Activated T-helper 2 cell treated with anti-CD3 and anti-CD28 coated beads, Interferon-gamma antibody, Interleukin-2, Interleukin-4, amounts not matched to agents 10 μg/mL and 5 μg/mL and 100 μg/mL, durations not matched to agents 14 hours and 24 hours and 36 hours (primary cell): ENCODE measurements at regions of chr9 and their contacts with region 1.

Region 1: GRCh38 chr9:93453047-93453914 is at the start of gene FAM120AOS:
- DNase-seq: peak; percentile 79
- H3K4me3 Mint-ChIP-seq: peak within 1 kb of the TSS; percentile 92
- H3K27ac Mint-ChIP-seq: peak within 1 kb of the TSS; percentile 93
- H3K4me1 Mint-ChIP-seq: peaks cover 44% of the 10 kb centered on the region
- H3K27me3 Mint-ChIP-seq: no peaks in the 10 kb centered on the region
- total RNA-seq, gene FAM120AOS: 40.9 and 41.1 TPM in 2 replicates

Region 2: GRCh38 chr9:93064392-93065134 is 388.7 kb before region 1 on chr9:
- intact Hi-C with region 1: loop called (anchors 5 kb)
- DNase-seq: peak; percentile 90
- H3K4me3 Mint-ChIP-seq: peak overlapping the region; percentile 76
- H3K27ac Mint-ChIP-seq: peak overlapping the region; percentile 94
- H3K4me1 Mint-ChIP-seq: peaks cover 64% of the 10 kb centered on the region
- H3K27me3 Mint-ChIP-seq: no peaks in the 10 kb centered on the region

Region 3: DNA sequence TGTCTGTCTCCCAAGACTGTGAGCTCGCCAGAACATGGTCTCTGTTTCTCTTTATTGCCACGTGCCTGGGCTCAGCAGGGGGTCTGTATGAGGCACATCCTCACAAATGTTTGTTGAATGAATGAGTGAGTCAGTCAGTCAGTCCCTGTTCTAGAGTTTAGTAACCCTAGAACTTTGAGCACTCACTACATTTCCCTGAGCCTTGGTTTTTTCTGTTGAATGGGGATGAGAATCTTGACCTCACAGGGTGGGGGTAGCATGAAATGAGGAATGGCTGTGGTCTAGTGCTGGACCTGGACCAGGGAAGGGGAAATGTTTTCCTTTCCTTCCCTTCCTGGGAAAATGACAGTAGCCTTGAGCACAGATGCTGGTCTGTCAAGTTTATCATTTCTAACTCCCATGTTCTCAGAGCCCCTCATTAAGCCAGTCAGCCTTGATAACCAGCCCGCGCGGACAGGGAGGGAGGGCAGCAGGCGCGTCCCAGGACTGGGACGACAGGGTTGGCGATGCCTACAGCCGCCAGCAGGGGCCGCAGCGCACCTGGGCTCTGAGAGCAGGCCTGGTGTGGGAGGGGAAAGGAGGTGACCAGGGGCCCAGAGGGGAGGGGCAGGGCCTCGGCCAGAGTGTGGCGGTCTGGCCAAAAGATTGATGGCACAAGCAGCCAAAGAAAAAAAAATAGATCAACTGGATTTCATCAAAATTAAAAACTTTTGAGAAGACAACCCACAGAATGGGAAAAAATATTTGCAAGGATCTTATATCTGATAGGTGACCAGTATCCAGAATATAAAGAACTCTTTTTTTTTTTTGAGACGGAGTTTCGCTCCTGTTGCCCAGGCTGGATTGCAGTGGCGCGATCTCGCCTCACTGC is 293.4 kb before region 1 on chr9:
- intact Hi-C with region 1: loop called (anchors 5 kb)
- DNase-seq: peak; percentile 60
- H3K4me3 Mint-ChIP-seq: no peak overlapping the region
- H3K27ac Mint-ChIP-seq: peak overlapping the region; percentile 53
- H3K4me1 Mint-ChIP-seq: peaks cover 22% of the 10 kb centered on the region
- H3K27me3 Mint-ChIP-seq: no peaks in the 10 kb centered on the region

Region 4: GRCh38 chr9:93505541-93506132 is 52.4 kb after region 1 on chr9:
- intact Hi-C with region 1: loop called (anchors 2 kb)
- DNase-seq: no peak
- H3K4me3 Mint-ChIP-seq: no peak overlapping the region
- H3K27ac Mint-ChIP-seq: no peak overlapping the region
- H3K4me1 Mint-ChIP-seq: peaks cover 57% of the 10 kb centered on the region
- H3K27me3 Mint-ChIP-seq: no peaks in the 10 kb centered on the region

Region 5: GRCh38 chr9:94166237-94166963 is 713.1 kb after region 1 on chr9:
- intact Hi-C with region 1: loop called (anchors 5 kb)
- DNase-seq: peak; percentile 91
- H3K4me3 Mint-ChIP-seq: peak overlapping the region; percentile 88
- H3K27ac Mint-ChIP-seq: peak overlapping the region; percentile 84
- H3K4me1 Mint-ChIP-seq: peaks cover 44% of the 10 kb centered on the region
- H3K27me3 Mint-ChIP-seq: no peaks in the 10 kb centered on the region